ENCODE measurements at regions of chr2 and their contacts with region 1.

Region 1: GRCh38 chr2:224638301-224638823 is 53.2 kb upstream of the CUL3 start:
- DNase-seq: no peak

Region 2: DNA sequence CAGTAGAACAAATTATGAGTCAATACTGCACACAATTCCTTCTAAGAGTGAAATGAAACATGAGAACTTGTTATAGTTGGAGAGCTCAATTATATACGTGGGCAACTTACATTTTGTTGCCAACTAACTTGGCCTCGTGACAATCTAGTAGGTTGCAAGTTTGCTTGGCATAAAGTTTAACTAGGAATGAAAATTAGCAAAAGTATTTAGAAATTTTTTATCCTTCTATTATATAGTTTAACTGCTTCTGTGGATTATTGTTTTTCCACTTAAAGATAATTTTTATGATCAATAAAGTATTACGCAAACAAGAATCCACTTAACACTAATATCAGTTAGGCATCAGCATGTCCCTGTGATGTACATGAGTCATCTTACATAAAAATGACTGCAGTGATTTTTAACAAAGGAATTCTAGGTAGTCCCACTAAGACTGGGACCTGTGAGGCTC is 277.5 kb before region 1 on chr2:
- CTCF ChIA-PET with region 1: interaction called, 10 read pairs
- POLR2A ChIA-PET with region 1: no interaction called
- DNase-seq: no peak

Region 3: DNA sequence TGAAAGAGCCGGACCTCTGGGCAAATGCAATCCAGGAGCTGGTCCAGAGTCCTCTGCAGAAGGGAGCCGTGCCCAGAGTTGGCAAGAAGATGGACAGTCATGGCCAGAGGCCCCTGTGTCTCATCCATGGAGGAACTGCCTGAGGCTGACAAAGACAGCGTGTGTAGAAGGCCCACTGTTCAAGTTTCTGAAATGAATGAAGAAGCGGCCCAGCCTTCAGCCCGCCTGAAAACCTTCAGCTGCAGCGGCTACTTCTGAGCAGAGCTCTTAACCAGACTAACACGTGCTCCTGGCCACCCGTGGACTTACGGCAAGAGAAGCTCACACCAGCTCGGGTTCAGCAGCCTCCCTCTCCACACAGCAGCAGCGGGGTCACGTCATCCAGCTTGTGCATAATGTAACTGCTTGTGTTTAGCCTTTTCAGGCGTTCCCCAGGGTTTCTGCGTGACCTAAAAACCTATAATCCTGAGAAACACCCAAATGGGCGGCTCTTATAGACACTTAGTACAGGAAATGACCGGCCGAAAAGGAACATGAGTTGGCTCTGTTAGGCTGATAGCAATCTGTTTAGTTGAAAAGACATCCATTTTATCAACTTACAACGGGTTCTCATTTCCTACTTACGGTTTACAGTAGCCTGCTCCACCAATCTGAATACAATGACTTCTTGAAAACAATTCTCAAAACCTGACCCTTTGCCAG is 236.6 kb before region 1 on chr2 and contains the start of gene FAM124B:
- CTCF ChIA-PET with region 1: no interaction called
- POLR2A ChIA-PET with region 1: no interaction called
- DNase-seq: peak; percentile 15

Region 4: DNA sequence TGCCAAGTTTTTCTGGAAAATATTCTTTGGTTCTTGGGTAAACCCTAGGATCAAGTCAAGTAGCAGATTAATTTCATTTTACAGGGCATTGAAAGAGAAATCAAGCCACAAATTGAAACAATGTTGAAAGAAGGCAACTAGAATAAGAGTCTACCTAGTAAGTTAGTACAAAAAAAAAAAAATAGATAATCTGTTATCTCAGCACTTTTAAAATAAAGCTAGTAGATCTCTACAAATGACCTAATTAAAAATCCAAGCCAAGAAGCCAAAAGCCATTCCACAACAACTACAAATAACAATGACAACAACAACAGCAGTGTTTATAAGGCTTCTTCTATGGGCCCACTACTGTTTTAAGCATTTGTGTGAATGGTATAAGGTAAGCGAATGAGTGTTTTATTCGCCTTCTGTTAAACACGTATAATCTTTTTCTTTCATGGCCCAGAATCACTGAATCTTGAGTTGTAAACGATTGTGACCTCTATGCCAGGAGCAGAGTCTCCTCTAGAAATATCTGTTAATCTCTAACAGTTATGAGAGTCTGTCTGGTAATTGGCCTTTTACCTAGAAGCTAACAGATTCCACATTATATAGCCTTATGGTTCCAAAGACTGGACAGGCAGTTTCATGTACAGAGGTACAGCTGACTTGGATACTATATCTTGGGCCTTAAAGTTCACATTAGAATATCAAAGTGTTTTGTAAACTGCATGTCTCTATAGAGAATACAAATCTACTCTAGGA is 24.6 kb before region 1 on chr2:
- CTCF ChIA-PET with region 1: no interaction called
- POLR2A ChIA-PET with region 1: no interaction called
- DNase-seq: no peak

Measured in HEK293T (cell line).